ENCODE measurements at regions of chr5 and their contacts with region 1.

Region 1: GRCh38 chr5:67447732-67448131 is 251.1 kb upstream of the CD180 start:
- DNase-seq: no peak
- ATAC-seq: no peak
- H3K4me3 ChIP-seq: no peak overlapping the region
- H3K27ac ChIP-seq: no peak overlapping the region
- H3K4me1 ChIP-seq: no peaks in the 10 kb centered on the region
- H3K27me3 ChIP-seq: no peaks in the 10 kb centered on the region
- CTCF ChIP-seq: no peak
- POLR2A ChIP-seq: no peak

Region 2: GRCh38 chr5:67341478-67341877 is 106.3 kb before region 1 on chr5:
- intact Hi-C with region 1: loop called in 1 of 2 experiments (anchors 5 kb)
- DNase-seq: no peak
- ATAC-seq: no peak
- H3K4me3 ChIP-seq: no peak overlapping the region
- H3K27ac ChIP-seq: no peak overlapping the region
- H3K4me1 ChIP-seq: no peaks in the 10 kb centered on the region
- H3K27me3 ChIP-seq: no peaks in the 10 kb centered on the region
- CTCF ChIP-seq: no peak
- POLR2A ChIP-seq: no peak

Measured in right lobe of liver (tissue), 6 donors.